Right ventricle myocardium inferior (tissue), 1 donor: ENCODE measurements at regions of chr10 and their contacts with region 1.

Region 1: DNA sequence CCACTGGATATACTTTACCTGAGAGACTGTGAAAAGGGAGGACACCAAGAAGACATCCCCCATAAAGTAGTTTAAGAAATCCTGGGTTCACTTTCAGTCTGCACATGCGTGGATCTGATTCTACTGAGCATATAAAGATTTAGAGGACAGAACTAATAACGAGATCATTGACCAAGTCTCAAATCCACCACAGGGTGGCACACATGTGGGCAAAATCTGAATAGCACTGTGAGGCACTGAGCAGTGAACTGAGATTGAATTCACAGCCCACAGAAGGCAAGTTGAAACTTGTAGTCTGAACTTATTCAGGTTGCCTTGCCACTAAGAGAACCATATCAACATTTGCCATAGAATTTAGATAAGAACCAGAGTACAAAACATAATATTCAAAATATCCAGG is 818.6 kb downstream of the GRID1 start:
- DNase-seq: no peak
- ATAC-seq: no peak

Region 2: GRCh38 chr10:85642421-85643170 is 94.6 kb after region 1 on chr10:
- intact Hi-C with region 1: no loop called
- DNase-seq: no peak
- ATAC-seq: no peak

Region 3: GRCh38 chr10:85671530-85671929 is 123.5 kb after region 1 on chr10:
- intact Hi-C with region 1: no loop called
- DNase-seq: no peak
- ATAC-seq: no peak

Region 4: GRCh38 chr10:86376852-86377796 is 829.1 kb after region 1 on chr10:
- intact Hi-C with region 1: loop called (anchors 5 kb)
- DNase-seq: peak; percentile 90
- ATAC-seq: peak; percentile 85